T-cell (primary cell): ENCODE measurements at regions of chr3 and their contacts with region 1.

Region 1: DNA sequence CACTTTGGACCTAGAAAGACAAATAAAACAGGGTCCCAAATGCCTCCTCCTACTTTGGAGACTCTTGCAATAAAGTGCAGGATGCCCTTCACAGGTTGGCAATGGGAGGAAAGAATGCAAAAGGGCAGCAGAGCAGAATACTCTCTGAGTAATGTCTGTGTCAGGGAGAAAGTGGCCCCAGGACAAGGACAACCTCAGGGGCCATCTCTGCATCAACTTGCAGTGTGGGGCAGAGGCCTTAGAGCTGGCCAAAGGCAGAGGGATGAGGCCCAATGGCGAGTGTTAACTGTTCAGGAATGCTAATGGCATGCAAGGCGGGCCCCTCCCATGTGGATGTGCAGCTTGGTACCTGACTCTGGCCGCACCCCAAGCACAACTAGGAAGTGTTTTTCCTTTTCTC is 8.4 kb downstream of the UPK1B start:
- DNase-seq: no peak
- ATAC-seq: no peak
- H3K4me3 ChIP-seq: no peak overlapping the region
- H3K4me3 Mint-ChIP-seq: no peak overlapping the region
- H3K27ac ChIP-seq: no peak overlapping the region
- H3K27ac Mint-ChIP-seq: no peak overlapping the region
- H3K4me1 ChIP-seq: no peaks in the 10 kb centered on the region
- H3K4me1 Mint-ChIP-seq: no peaks in the 10 kb centered on the region
- H3K27me3 ChIP-seq: no peaks in the 10 kb centered on the region
- H3K27me3 Mint-ChIP-seq: peaks cover 0 to 2% of the 10 kb centered on the region in 2 donors

Region 2: GRCh38 chr3:119331661-119332060 is 149.9 kb after region 1 on chr3:
- CTCF ChIA-PET with region 1: interaction called in 1 of 2 experiments, 11 read pairs
- POLR2A ChIA-PET with region 1: no interaction called
- DNase-seq: no peak
- ATAC-seq: no peak
- H3K4me3 ChIP-seq: no peak overlapping the region
- H3K4me3 Mint-ChIP-seq: no peak overlapping the region
- H3K27ac ChIP-seq: no peak overlapping the region
- H3K27ac Mint-ChIP-seq: no peak overlapping the region
- H3K4me1 ChIP-seq: no peaks in the 10 kb centered on the region
- H3K4me1 Mint-ChIP-seq: no peaks in the 10 kb centered on the region
- H3K27me3 ChIP-seq: no peaks in the 10 kb centered on the region
- H3K27me3 Mint-ChIP-seq: no peaks in the 10 kb centered on the region